Activated CD4-positive, alpha-beta T cell treated with anti-CD3 and anti-CD28 coated beads, Interleukin-2, amount 10 ng/mL, durations not matched to agents 24 days and 14 days (primary cell): ENCODE measurements at regions of chr7 and their contacts with region 1.

Region 1: GRCh38 chr7:33757562-33758165 is 147.7 kb upstream of the BMPER start:
- DNase-seq: peak; percentile 68
- H3K4me3 Mint-ChIP-seq: no peak overlapping the region
- H3K27ac Mint-ChIP-seq: no peak overlapping the region
- H3K4me1 Mint-ChIP-seq: no peaks in the 10 kb centered on the region
- H3K27me3 Mint-ChIP-seq: no peaks in the 10 kb centered on the region

Region 2: GRCh38 chr7:33743594-33743993 is 14.1 kb before region 1 on chr7:
- intact Hi-C with region 1: no loop called
- DNase-seq: no peak
- H3K4me3 Mint-ChIP-seq: no peak overlapping the region
- H3K27ac Mint-ChIP-seq: no peak overlapping the region
- H3K4me1 Mint-ChIP-seq: no peaks in the 10 kb centered on the region
- H3K27me3 Mint-ChIP-seq: no peaks in the 10 kb centered on the region

Region 3: DNA sequence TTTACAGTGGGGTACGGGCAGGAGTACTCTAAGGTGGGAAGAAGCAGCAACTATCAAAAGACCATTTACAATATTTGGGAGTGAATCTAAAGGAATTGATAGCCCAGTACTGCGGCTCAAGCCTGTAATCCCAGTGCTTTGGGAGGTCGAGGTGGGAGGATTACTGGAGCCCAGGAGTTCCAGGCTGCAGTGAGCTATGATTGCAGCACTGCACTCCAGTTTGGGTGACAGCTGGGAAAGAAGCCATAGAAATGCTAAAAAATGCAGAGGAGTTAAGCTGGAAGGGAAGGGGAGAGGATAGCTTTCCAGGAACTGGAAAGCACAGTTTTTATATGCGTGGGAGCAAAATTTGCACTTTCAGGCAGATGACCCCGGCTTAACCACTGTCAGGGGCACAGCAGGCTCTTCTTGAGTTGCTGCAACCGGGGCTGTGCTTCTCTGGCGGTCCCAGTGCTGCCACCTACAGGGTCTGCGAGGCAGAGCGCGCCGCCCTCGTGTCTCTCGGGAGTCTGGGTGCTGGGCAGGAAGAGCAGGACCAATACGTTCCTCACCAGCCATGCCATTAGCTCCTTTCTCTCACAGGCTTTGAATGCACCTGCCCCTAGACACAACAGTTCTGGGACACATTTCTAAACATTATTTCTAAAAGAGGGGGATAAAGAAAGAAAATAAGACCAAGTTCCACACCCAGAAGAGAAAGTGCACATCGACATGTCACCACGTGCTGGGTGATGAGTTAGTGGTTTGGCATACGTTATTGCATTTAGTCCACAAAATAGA is 137.6 kb after region 1 on chr7:
- intact Hi-C with region 1: loop called (anchors 2 kb)
- DNase-seq: peak; percentile 90
- H3K4me3 Mint-ChIP-seq: no peak overlapping the region
- H3K27ac Mint-ChIP-seq: no peak overlapping the region
- H3K4me1 Mint-ChIP-seq: no peaks in the 10 kb centered on the region
- H3K27me3 Mint-ChIP-seq: peaks cover 9% of the 10 kb centered on the region